ENCODE measurements at regions of chr5 and their contacts with region 1.

Region 1: GRCh38 chr5:38441453-38442246 is 114.8 kb downstream of the LIFR start:
- DNase-seq: peak; percentile 7
- H3K4me3 ChIP-seq: no peak overlapping the region
- H3K27ac ChIP-seq: no peak overlapping the region
- H3K4me1 ChIP-seq: no peaks in the 10 kb centered on the region
- H3K27me3 ChIP-seq: peaks cover 0 to 22% (median 0%) of the 10 kb centered on the region in 4 donors
- CTCF ChIP-seq: peak; percentile 73 to 97 (median 92)
- POLR2A ChIP-seq: no peak

Region 2: DNA sequence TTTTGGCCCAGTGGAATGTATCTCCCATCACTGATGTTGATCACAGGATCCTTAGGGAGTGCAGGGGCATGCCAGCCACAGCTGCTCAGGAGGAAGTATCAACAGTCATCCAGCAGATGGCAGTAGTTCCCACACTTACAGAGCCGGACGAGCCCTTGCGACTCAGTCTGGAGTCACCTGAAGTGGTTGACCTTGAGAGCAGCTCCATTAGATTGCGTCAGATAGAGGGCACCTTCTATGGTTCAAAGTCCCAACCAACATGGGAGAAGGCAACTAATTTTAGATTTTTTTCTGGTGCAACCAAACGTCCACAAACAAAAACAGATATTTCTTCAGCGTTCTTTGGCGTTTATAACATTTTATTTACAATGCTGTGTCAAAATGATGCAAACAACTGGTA is 58.8 kb before region 1 on chr5:
- intact Hi-C with region 1: no loop called
- DNase-seq: no peak
- H3K4me3 ChIP-seq: no peak overlapping the region
- H3K27ac ChIP-seq: no peak overlapping the region
- H3K4me1 ChIP-seq: peaks cover 0 to 14% (median 0%) of the 10 kb centered on the region in 3 donors
- H3K27me3 ChIP-seq: peaks cover 0 to 13% (median 0%) of the 10 kb centered on the region in 4 donors
- CTCF ChIP-seq: peak; percentile 54 to 73 (median 65)
- POLR2A ChIP-seq: no peak

Region 3: DNA sequence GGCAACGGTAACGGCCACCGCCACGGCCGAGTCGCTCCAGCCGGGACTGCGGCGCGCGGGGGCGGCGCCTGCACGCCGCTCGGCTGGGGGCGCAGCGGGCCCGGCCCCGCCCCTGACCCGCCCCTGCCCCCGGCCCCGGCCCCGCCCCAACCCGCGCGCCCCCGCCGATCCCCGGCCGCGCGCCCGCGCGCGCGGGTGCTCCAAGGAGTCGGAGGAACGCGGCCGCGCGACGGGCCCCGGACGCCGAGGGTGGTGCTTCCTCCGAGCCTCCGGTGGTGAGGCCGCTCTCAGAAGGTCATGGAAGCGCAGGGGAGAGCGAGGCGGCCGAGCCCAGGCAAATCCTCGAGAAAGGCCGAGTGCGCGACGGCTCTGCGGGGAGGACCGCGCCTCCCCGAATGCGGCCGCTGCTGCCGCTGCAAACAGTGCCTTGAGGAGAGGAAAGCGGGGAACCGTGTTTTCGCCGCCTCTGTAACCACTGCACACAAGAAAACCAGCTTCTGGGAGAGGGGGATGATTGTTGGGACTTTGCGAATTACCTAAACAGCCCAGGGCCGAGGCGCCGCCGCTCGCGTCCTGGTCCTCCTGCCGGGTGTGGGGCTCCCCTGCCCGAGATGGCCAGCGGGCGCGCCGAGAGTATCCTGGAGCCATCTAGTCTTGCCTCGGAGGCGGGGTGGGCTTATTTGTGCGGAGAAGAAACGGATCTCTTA is 115.1 kb after region 1 on chr5 and contains the start of gene LIFR:
- intact Hi-C with region 1: loop called (anchors 10 kb)
- DNase-seq: no peak
- H3K4me3 ChIP-seq: peak within 1 kb of the TSS; percentile 80 to 94 (median 86)
- H3K27ac ChIP-seq: peak within 1 kb of the TSS; percentile 90 to 97 (median 92)
- H3K4me1 ChIP-seq: peaks cover 0 to 39% (median 0%) of the 10 kb centered on the region in 3 donors
- H3K27me3 ChIP-seq: peaks cover 0 to 16% (median 0%) of the 10 kb centered on the region in 4 donors
- CTCF ChIP-seq: no peak
- POLR2A ChIP-seq: peak in 2 of 4 donors; percentile 63 to 82
- total RNA-seq, gene LIFR: 3.1 to 72.9 (median 16.9) TPM

Region 4: GRCh38 chr5:38639377-38640332 is 198.0 kb after region 1 on chr5:
- intact Hi-C with region 1: no loop called
- DNase-seq: no peak
- H3K4me3 ChIP-seq: no peak overlapping the region
- H3K27ac ChIP-seq: no peak overlapping the region
- H3K4me1 ChIP-seq: no peaks in the 10 kb centered on the region
- H3K27me3 ChIP-seq: no peaks in the 10 kb centered on the region
- CTCF ChIP-seq: no peak
- POLR2A ChIP-seq: no peak

Region 5: GRCh38 chr5:38809388-38810359 is 368.0 kb after region 1 on chr5:
- intact Hi-C with region 1: loop called (anchors 5 kb)
- DNase-seq: peak; percentile 11
- H3K4me3 ChIP-seq: no peak overlapping the region
- H3K27ac ChIP-seq: peak overlapping the region in 3 of 4 donors; percentile 43 to 53 (median 49)
- H3K4me1 ChIP-seq: peaks cover 0 to 43% (median 4%) of the 10 kb centered on the region in 3 donors
- H3K27me3 ChIP-seq: no peaks in the 10 kb centered on the region
- CTCF ChIP-seq: peak; percentile 45 to 89 (median 76)
- POLR2A ChIP-seq: no peak

Region 6: GRCh38 chr5:38925154-38925925 is 483.7 kb after region 1 on chr5:
- intact Hi-C with region 1: no loop called
- DNase-seq: no peak
- H3K4me3 ChIP-seq: no peak overlapping the region
- H3K27ac ChIP-seq: peak overlapping the region in 3 of 4 donors; percentile 55 to 73 (median 57)
- H3K4me1 ChIP-seq: peaks cover 0 to 19% (median 0%) of the 10 kb centered on the region in 3 donors
- H3K27me3 ChIP-seq: no peaks in the 10 kb centered on the region
- CTCF ChIP-seq: no peak
- POLR2A ChIP-seq: no peak

Measured in esophagus squamous epithelium (tissue), 5 donors.